Caco-2 (cell line): ENCODE measurements at regions of chr20 and their contacts with region 1.

Region 1: GRCh38 chr20:44080646-44081267 is 106.2 kb downstream of the JPH2 start:
- DNase-seq: peak; percentile 85 to 88
- H3K4me3 ChIP-seq: no peak overlapping the region
- H3K4me3 Mint-ChIP-seq: no peak overlapping the region
- H3K27ac Mint-ChIP-seq: no peak overlapping the region
- H3K4me1 ChIP-seq: no peaks in the 10 kb centered on the region
- H3K4me1 Mint-ChIP-seq: no peaks in the 10 kb centered on the region
- H3K27me3 ChIP-seq: no peaks in the 10 kb centered on the region
- H3K27me3 Mint-ChIP-seq: peaks cover 13% of the 10 kb centered on the region
- CTCF ChIP-seq: peak; percentile 99 to 100

Region 2: DNA sequence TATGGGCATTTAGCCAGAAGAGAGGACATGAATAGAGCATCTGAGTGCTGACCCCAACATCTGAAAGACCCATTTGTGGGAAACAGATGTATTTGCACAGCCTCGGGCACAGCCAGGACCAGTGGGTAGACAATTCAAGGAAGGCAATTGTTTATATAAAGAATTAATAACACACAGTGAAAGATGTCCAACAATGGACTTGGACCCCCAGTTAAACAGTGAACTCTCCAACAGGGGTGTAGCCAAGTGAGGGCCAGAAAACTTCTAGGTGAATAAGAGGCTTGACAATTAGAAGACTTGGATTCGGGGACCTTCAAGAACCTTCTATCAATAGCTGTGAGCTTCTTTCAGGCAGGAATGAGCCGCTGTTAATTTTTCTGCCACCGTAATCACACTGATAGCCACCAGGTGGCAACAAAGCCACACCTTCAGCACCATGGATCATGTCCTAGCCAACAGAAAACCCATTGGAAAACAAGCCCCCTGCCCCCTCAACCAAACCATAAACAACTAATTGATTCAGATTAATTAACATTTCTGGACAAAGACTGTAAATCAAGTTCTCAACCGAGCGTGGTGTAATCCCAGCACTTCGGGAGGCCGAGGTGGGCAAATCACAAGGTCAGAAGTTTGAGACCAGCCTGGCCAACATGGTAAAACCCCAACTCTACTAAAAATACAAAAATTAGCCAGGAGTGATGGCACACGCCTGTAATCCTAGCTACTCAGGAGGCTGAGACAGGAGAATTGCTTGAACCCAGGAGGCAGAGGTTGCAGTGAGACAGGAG is 631.8 kb before region 1 on chr20:
- CTCF ChIA-PET with region 1: interaction called, 7 read pairs
- POLR2A ChIA-PET with region 1: no interaction called
- intact Hi-C with region 1: loop called (anchors 1 kb)
- DNase-seq: peak; percentile 72 to 78
- H3K4me3 ChIP-seq: no peak overlapping the region
- H3K4me3 Mint-ChIP-seq: no peak overlapping the region
- H3K27ac Mint-ChIP-seq: no peak overlapping the region
- H3K4me1 ChIP-seq: no peaks in the 10 kb centered on the region
- H3K4me1 Mint-ChIP-seq: no peaks in the 10 kb centered on the region
- H3K27me3 ChIP-seq: no peaks in the 10 kb centered on the region
- H3K27me3 Mint-ChIP-seq: peaks cover 2% of the 10 kb centered on the region
- CTCF ChIP-seq: peak; percentile 95

Region 3: DNA sequence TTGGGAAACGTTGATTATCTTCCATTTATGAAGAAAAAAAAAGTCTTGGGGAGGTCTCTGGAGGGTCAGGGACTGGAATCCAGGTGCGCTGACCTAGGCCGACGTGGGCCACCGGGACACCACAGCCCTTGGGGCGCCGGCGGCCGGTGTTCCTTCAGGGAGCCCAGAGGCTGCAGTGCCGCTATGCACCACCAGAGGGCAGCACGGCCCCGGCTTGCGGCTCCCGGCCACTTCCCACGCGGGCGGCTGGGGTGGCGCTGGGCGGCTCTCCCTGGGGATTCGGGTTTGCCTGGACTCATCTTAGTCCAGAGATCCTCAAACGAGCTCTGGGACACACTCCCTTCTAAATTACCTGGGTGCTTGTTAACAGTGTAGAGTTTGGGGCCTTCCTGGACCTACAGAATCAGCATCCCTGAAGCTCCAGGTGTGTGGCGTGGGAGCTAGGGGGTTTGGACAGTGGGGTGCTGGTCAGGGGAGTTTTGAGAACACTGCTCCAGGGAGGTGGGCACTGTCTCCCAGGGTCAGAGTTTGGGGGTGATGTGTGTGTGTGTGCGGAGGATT is 330.9 kb before region 1 on chr20:
- CTCF ChIA-PET with region 1: interaction called, 11 read pairs
- POLR2A ChIA-PET with region 1: no interaction called
- intact Hi-C with region 1: loop called (anchors 1 kb)
- DNase-seq: peak; percentile 87 to 98
- H3K4me3 ChIP-seq: no peak overlapping the region
- H3K4me3 Mint-ChIP-seq: no peak overlapping the region
- H3K27ac Mint-ChIP-seq: no peak overlapping the region
- H3K4me1 ChIP-seq: peaks cover 22% of the 10 kb centered on the region
- H3K4me1 Mint-ChIP-seq: peaks cover 16% of the 10 kb centered on the region
- H3K27me3 ChIP-seq: peaks cover 2% of the 10 kb centered on the region
- H3K27me3 Mint-ChIP-seq: peaks cover 19% of the 10 kb centered on the region
- CTCF ChIP-seq: peak; percentile 100

Region 4: DNA sequence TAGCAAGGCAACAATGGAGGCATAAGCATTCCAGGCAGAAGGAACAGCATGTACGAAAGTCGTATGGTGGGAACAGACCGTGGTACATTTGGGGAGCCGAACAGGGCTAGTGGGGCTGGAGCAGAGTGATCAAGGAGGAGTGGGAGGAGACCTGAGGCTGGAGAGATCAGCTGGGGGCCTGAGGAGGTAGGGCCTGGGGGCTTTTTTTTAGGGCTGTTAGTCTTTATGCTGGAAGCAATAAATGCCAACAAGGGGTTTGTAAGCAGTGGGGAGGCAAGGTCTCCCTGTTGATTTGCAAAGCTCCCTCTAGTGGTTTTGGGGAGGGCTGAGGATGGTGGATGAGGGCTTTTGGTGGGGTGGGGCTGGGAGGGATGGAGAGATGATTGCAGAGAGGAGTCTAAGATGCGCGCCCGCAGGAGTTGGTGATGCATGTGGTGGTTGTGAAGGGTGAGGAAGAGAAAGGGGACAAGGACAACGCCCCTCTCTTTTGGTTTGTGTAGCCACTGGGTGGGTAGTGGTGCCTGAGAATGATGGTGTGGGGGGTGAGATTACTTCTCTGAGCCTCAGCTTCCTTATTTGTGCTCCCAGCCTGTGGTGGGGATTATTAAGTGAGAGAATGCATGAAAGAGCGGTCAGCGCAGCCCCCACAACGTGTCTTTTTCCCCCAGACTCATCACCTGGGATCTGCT is 240.2 kb before region 1 on chr20:
- CTCF ChIA-PET with region 1: no interaction called
- POLR2A ChIA-PET with region 1: no interaction called
- intact Hi-C with region 1: loop called (anchors 1 kb)
- DNase-seq: peak; percentile 57 to 59
- H3K4me3 ChIP-seq: no peak overlapping the region
- H3K4me3 Mint-ChIP-seq: no peak overlapping the region
- H3K27ac Mint-ChIP-seq: no peak overlapping the region
- H3K4me1 ChIP-seq: no peaks in the 10 kb centered on the region
- H3K4me1 Mint-ChIP-seq: no peaks in the 10 kb centered on the region
- H3K27me3 ChIP-seq: no peaks in the 10 kb centered on the region; the same call in 1 of the 2 replicates
- H3K27me3 Mint-ChIP-seq: peaks cover 31% of the 10 kb centered on the region
- CTCF ChIP-seq: peak; percentile 66 to 86

Region 5: GRCh38 chr20:44056010-44056698 is 24.6 kb before region 1 on chr20:
- CTCF ChIA-PET with region 1: interaction called, 8 read pairs
- POLR2A ChIA-PET with region 1: no interaction called
- intact Hi-C with region 1: loop called (anchors 1 kb)
- DNase-seq: peak; percentile 74 to 80
- H3K4me3 ChIP-seq: no peak overlapping the region
- H3K4me3 Mint-ChIP-seq: no peak overlapping the region
- H3K27ac Mint-ChIP-seq: no peak overlapping the region
- H3K4me1 ChIP-seq: no peaks in the 10 kb centered on the region
- H3K4me1 Mint-ChIP-seq: no peaks in the 10 kb centered on the region
- H3K27me3 ChIP-seq: no peaks in the 10 kb centered on the region
- H3K27me3 Mint-ChIP-seq: peaks cover 24% of the 10 kb centered on the region
- CTCF ChIP-seq: peak; percentile 91 to 94

Region 6: DNA sequence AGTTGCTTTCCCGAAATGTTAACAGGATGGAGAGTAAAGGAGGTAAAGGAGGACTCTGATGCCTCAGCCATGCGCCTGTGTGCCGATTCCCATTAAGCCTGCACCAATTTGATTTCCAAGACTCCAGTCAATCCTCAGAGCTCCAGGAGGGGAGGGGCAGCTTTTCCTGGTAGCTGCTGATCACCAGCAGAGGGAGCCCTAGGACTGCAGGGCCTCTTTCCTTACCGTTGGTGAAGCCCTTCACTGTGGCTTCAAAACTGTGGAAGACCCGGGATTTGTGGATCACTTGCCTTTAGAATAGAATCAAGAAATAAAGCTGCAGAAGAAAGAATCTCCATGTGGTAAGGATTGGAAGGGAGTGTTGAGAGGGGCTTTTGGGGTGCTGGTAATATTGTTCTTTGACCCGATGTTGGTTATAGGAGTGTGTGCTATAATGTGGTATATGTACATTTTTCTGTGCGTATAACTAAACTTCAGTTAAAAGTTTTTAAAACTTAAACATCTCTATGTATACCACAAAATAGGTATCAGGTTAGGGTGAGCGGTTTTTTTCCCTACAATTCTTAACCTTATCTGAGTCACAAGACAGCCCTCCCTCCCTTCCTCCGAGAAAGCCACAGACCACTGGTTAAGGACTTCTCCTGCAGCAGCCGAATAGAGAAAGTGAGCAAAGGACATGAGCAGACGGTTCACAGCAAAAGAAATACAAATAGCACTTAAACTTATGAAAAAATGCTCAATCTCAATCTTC is 136.8 kb after region 1 on chr20:
- CTCF ChIA-PET with region 1: no interaction called
- POLR2A ChIA-PET with region 1: no interaction called
- intact Hi-C with region 1: no loop called
- DNase-seq: peak; percentile 92 to 95
- H3K4me3 ChIP-seq: no peak overlapping the region
- H3K4me3 Mint-ChIP-seq: no peak overlapping the region
- H3K27ac Mint-ChIP-seq: peak overlapping the region; percentile 8
- H3K4me1 ChIP-seq: peaks cover 49% of the 10 kb centered on the region
- H3K4me1 Mint-ChIP-seq: peaks cover 49% of the 10 kb centered on the region
- H3K27me3 ChIP-seq: no peaks in the 10 kb centered on the region
- H3K27me3 Mint-ChIP-seq: no peaks in the 10 kb centered on the region
- CTCF ChIP-seq: peak; percentile 100